ENCODE measurements at regions of chr1 and their contacts with region 1.

Region 1: DNA sequence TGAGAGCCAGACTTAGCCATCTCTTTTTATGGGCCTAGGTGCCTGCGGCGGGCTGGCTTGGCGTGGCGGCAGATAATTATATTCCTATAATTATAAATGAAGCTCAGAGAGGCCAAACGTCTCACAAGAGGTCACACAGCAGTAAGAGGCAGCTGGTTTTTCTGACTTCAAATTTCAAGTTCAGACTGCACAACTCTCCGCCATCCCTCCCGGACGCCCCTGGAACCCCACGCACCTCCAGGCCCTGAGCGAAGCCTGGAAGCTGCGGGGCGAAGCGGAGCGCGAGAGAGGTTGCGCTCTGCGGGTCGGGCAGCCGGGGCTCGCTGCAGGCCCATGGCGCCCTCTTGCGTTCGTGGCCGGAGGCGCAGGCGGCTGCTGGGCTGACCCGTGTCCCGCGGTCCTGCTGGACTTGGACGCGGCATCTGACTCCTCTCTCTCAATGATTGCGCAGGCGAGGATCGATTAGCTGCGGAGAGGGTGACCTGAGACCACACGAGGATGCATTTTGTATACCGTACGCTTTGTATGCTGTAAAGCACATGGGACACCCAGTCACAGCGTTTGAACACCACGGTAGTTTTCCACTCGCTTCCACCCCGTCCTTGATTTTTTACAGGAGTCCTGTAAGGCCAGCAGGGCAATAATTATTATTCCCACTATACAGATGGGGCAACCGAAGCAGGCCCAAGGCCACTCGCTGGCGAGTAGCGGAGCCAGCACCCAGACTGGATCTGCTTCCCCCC is 272.7 kb downstream of the FOXD2 start:
- DNase-seq: peak; percentile 56
- H3K4me3 Mint-ChIP-seq: no peak overlapping the region
- H3K27ac Mint-ChIP-seq: no peak overlapping the region
- H3K4me1 Mint-ChIP-seq: no peaks in the 10 kb centered on the region
- H3K27me3 Mint-ChIP-seq: peaks cover 59% of the 10 kb centered on the region

Region 2: DNA sequence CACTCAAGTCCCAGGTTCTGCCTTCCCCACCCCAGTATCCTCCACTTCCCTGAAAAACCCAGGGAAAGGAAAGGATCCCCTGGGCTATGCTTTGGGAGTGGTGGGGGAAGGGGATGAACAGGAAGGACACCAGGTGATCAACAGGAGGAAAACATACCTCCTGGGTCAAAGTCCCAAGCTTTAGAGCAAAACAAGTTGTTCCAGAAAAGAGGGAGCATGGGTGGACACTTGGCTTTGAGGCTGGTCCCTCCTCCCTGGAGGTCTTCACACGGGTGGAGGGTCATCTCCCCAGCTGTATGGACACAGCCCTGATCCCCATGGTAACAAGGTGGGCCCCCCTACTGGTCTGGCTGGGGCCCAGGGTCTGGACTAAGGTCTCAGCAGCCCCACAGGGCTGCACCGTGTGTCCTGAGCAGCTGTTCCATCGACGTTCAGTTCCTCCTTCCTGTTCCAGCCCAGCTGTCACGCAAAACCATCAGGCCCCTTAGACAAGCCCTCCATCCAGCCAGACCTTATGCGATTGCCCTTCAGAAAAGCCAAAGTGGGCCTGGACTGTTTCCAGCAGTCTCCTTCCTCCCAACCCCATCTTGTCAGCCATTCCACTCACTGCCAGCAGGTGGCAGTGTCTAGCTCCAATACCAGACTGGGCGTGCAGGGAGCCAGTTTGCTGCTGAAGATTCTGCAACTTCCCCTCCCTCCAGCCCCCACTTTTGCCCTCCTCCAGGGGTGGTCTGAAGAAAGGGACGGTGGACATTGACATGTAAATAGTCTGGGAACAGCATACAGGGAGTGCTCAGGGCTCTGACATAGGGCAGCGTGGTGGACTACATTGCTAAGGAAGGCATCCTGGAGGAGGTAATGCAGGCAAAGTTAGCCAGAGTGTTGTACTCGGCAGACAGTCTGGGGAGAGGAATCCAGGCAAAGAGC is 517.8 kb before region 1 on chr1:
- intact Hi-C with region 1: loop called (anchors 1 kb)
- DNase-seq: peak; percentile 54
- H3K4me3 Mint-ChIP-seq: no peak overlapping the region
- H3K27ac Mint-ChIP-seq: no peak overlapping the region
- H3K4me1 Mint-ChIP-seq: no peaks in the 10 kb centered on the region
- H3K27me3 Mint-ChIP-seq: peaks cover 3% of the 10 kb centered on the region

Region 3: GRCh38 chr1:47231301-47232186 is 479.0 kb before region 1 on chr1:
- intact Hi-C with region 1: loop called (anchors 5 kb)
- DNase-seq: no peak
- H3K4me3 Mint-ChIP-seq: peak overlapping the region; percentile 73
- H3K27ac Mint-ChIP-seq: peak overlapping the region; percentile 86
- H3K4me1 Mint-ChIP-seq: peaks cover 14% of the 10 kb centered on the region
- H3K27me3 Mint-ChIP-seq: peaks cover 87% of the 10 kb centered on the region

Region 4: DNA sequence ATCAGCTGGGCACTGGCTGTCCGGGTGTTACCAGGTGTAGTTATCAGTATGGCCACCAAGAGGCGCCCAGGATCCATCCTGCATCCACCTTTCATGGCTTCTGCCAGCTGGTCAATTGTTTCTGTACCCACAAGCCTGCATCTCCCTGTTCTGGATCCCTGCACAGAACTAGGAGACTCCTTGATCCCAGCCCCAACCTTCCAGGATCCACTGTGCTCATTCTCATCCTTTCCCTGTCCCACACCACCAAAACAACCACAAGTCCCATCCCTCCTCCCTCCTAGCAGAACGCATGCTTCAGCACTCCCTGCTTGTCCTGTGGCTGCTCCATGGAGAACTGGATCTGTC is 321.6 kb before region 1 on chr1:
- intact Hi-C with region 1: loop called (anchors 1 kb)
- DNase-seq: peak; percentile 22
- H3K4me3 Mint-ChIP-seq: no peak overlapping the region
- H3K27ac Mint-ChIP-seq: no peak overlapping the region
- H3K4me1 Mint-ChIP-seq: no peaks in the 10 kb centered on the region
- H3K27me3 Mint-ChIP-seq: peaks cover 22% of the 10 kb centered on the region

Region 5: GRCh38 chr1:47432071-47433036 is 278.1 kb before region 1 on chr1:
- intact Hi-C with region 1: loop called (anchors 1 kb)
- DNase-seq: peak; percentile 28
- H3K4me3 Mint-ChIP-seq: no peak overlapping the region
- H3K27ac Mint-ChIP-seq: no peak overlapping the region
- H3K4me1 Mint-ChIP-seq: peaks cover 34% of the 10 kb centered on the region
- H3K27me3 Mint-ChIP-seq: peaks cover 36% of the 10 kb centered on the region

Region 6: DNA sequence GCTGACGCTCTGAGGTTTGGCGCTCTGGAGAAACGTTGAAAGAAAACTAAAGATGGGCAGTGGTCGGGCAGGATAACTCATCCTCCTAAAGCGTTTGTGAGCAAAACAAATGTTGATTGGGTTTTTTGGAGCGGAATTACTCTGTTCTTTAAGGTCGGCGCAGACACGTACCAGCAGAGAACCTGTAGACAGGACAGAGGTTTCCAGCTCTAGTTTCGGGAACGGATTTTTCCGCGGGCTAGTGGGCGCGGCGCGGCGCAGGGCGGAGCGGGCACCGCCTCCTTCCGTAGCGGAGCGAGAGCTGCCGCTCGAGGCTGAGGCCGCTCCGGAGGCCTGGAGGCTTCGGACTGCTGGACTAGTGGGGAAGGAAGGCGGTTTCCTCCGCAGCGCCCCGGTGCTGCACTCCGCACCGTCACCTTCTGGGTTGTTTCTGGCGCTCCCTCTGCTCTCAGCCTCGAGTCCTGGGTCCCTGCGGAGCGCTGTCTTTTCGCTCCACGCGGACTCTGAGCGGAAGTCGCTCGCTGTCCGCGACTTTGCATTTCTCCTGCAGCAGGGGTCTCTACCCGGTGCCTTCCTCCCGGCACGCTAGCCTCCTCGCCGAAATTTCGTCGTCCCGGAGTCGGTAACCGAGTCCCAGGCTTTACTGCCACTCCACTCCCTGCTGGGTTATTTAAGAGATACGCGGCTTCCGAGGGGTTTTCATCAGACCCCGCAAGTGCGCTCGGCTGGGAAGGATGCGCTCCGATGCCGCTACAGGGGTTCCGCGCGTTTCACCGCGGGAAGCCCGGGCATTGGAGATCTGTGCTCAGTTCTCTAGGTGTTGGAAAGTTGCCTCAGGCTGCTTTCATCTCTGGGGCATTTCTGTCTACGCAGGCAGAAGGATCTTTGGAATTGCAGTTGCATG is 265.7 kb before region 1 on chr1:
- intact Hi-C with region 1: loop called (anchors 2 kb)
- DNase-seq: no peak
- H3K4me3 Mint-ChIP-seq: peak overlapping the region; percentile 62
- H3K27ac Mint-ChIP-seq: peak overlapping the region; percentile 80
- H3K4me1 Mint-ChIP-seq: peaks cover 14% of the 10 kb centered on the region
- H3K27me3 Mint-ChIP-seq: peaks cover 20% of the 10 kb centered on the region

Region 7: GRCh38 chr1:47725992-47726855 is 15.7 kb after region 1 on chr1:
- intact Hi-C with region 1: loop called (anchors 2 kb)
- DNase-seq: peak; percentile 34
- H3K4me3 Mint-ChIP-seq: no peak overlapping the region
- H3K27ac Mint-ChIP-seq: no peak overlapping the region
- H3K4me1 Mint-ChIP-seq: peaks cover 5% of the 10 kb centered on the region
- H3K27me3 Mint-ChIP-seq: peaks cover 46% of the 10 kb centered on the region

Measured in activated T-helper 1 cell treated with anti-CD3 and anti-CD28 coated beads, Interleukin-12 subunit alpha, Interleukin-12 subunit beta, Interleukin-2, Interleukin-4 antibody, amounts not matched to agents 30 ng/mL and 10 ng/mL and 1 ng/mL, durations not matched to agents 14 hours and 24 hours and 36 hours (primary cell).